Dorsolateral prefrontal cortex (tissue), 120 donors: ENCODE measurements at regions of chr13 and their contacts with region 1.

Region 1: GRCh38 chr13:33610471-33611015 is 207.4 kb upstream of the RFC3 start:
- DNase-seq: peak; percentile 63 to 82 (median 77)
- H3K4me3 ChIP-seq: peak overlapping the region; percentile 9 to 64 (median 45)
- H3K27ac ChIP-seq: peak overlapping the region; percentile 78 to 99 (median 95)
- H3K27me3 ChIP-seq: no peaks in the 10 kb centered on the region
- CTCF ChIP-seq: peak in 20 of 56 donors; percentile 3 to 41 (median 18)

Region 2: DNA sequence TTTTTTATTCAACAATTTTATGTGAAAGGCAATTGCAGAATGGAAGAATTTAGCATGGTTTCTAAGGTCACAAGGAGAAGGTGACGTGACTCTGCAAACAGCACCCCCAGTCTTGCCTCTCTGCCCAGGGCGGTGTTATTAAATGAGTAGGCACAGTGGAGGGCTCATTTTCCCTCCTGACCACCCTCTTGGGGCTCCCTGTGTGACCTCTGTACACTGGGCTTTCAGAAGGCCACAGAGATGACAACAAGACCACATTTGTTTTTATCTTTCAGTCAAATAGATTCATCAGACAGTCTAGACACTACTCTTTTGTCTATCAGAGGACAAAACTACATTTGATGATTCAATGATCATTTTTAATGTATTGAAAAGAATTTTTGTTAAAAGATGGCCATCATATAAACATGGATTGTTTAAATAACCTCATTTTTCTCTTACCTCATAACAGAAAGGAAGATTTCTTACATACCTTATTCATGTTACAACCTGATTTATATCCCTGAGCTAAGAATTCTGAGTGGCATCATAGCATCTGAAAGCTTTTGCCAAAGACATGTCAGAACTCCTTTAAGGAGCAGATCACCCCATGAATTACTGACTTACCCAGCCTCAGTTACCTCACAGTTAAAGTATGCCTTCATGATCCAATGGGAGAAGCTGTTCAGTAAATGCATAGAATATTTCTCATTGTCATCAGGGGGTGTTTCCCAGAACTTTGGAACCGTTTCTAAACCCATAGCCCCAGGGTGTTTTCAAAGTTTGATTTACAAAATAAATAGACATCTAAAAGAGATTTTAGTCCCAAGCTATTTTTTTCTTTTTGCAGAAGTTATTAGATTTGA is 23.4 kb after region 1 on chr13:
- intact Hi-C with region 1: loop called in 1 of 2 experiments (anchors 1 kb)
- DNase-seq: peak in 2 of 10 donors; percentile 36 to 59
- H3K4me3 ChIP-seq: peak overlapping the region in 34 of 59 donors; percentile 2 to 50 (median 20)
- H3K27ac ChIP-seq: peak overlapping the region in 58 of 59 donors; percentile 74 to 98 (median 92)
- H3K27me3 ChIP-seq: no peaks in the 10 kb centered on the region
- CTCF ChIP-seq: peak in 4 of 56 donors; percentile 6 to 18 (median 12)

Region 3: GRCh38 chr13:33678906-33679657 is 68.5 kb after region 1 on chr13:
- intact Hi-C with region 1: loop called in 1 of 2 experiments (anchors 5 kb)
- DNase-seq: peak in 7 of 10 donors; percentile 25 to 83 (median 52)
- H3K4me3 ChIP-seq: peak overlapping the region in 7 of 59 donors; percentile 0 to 26 (median 15)
- H3K27ac ChIP-seq: peak overlapping the region in 26 of 59 donors; percentile 0 to 69 (median 38)
- H3K27me3 ChIP-seq: no peaks in the 10 kb centered on the region
- CTCF ChIP-seq: no peak

Region 4: DNA sequence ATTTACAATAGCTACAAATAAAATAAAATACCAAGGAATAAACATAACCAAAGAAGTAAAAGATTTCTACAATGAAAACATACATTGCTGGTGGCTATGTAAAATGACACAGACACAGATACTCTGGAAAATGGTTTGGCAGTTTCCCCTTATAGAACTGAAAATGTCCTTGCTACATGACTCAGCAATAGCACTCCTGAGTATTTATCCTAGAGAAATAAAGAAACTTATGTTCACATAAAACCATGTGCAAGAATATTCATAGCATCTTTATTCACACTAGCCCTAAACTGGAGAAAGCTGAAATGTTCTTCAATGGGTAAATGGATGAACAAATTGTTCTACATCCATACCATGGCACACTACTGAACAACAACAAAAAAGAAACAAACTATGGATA is 107.2 kb after region 1 on chr13:
- intact Hi-C with region 1: loop called (anchors 2 to 5 kb)
- DNase-seq: no peak
- H3K4me3 ChIP-seq: no peak overlapping the region
- H3K27ac ChIP-seq: peak overlapping the region in 48 of 59 donors; percentile 18 to 88 (median 70)
- H3K27me3 ChIP-seq: no peaks in the 10 kb centered on the region
- CTCF ChIP-seq: no peak